Activated B cell treated with CpG ODN at 0.5 μM for 24 hours (primary cell): ENCODE measurements at regions of chr7 and their contacts with region 1.

Region 1: GRCh38 chr7:2307611-2308107 is 6.6 kb downstream of the SNX8 start:
- DNase-seq: peak; percentile 53
- ATAC-seq: peak; percentile 64
- H3K4me3 Mint-ChIP-seq: peak overlapping the region; percentile 85
- H3K27ac Mint-ChIP-seq: peak overlapping the region; percentile 94
- H3K4me1 Mint-ChIP-seq: peaks cover 76% of the 10 kb centered on the region
- H3K27me3 Mint-ChIP-seq: no peaks in the 10 kb centered on the region
- CTCF ChIP-seq: no peak

Region 2: DNA sequence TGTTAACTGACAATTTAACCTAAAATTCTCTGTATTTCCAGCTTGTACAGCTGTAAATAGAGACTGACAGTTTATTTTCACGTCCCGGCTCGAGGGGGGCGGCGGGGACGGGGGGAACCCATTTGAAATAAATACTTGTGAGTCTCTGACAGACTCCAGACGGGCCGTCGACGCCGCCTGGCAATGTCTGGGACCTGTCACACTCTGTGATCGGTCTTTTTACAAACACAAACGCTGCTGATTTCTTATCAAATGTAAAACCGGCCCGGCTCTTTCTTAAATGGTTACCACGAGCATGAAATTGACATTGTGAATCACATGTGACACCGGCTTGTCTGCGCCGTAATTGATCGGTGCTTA is 1018.0 kb before region 1 on chr7:
- CTCF ChIA-PET with region 1: no interaction called
- POLR2A ChIA-PET with region 1: interaction called, 12 read pairs
- intact Hi-C with region 1: no loop called
- DNase-seq: no peak
- ATAC-seq: no peak
- H3K4me3 Mint-ChIP-seq: no peak overlapping the region
- H3K27ac Mint-ChIP-seq: no peak overlapping the region
- H3K4me1 Mint-ChIP-seq: peaks cover 10% of the 10 kb centered on the region
- H3K27me3 Mint-ChIP-seq: peaks cover 22% of the 10 kb centered on the region
- CTCF ChIP-seq: no peak

Region 3: GRCh38 chr7:2248984-2249694 is 58.5 kb before region 1 on chr7:
- CTCF ChIA-PET with region 1: no interaction called
- POLR2A ChIA-PET with region 1: interaction called, 14 read pairs
- intact Hi-C with region 1: no loop called
- DNase-seq: no peak
- ATAC-seq: peak; percentile 25
- H3K4me3 Mint-ChIP-seq: peak overlapping the region; percentile 7
- H3K27ac Mint-ChIP-seq: peak overlapping the region; percentile 76
- H3K4me1 Mint-ChIP-seq: peaks cover 53% of the 10 kb centered on the region
- H3K27me3 Mint-ChIP-seq: no peaks in the 10 kb centered on the region
- CTCF ChIP-seq: no peak

Region 4: GRCh38 chr7:2288503-2288902 is 19.2 kb before region 1 on chr7:
- CTCF ChIA-PET with region 1: interaction called, 4 read pairs
- POLR2A ChIA-PET with region 1: interaction called, 31 read pairs
- intact Hi-C with region 1: no loop called
- DNase-seq: peak; percentile 34
- ATAC-seq: peak; percentile 89
- H3K4me3 Mint-ChIP-seq: peak overlapping the region; percentile 73
- H3K27ac Mint-ChIP-seq: peak overlapping the region; percentile 97
- H3K4me1 Mint-ChIP-seq: peaks cover 49% of the 10 kb centered on the region
- H3K27me3 Mint-ChIP-seq: no peaks in the 10 kb centered on the region
- CTCF ChIP-seq: no peak